ENCODE measurements at regions of chr2 and their contacts with region 1.

Region 1: DNA sequence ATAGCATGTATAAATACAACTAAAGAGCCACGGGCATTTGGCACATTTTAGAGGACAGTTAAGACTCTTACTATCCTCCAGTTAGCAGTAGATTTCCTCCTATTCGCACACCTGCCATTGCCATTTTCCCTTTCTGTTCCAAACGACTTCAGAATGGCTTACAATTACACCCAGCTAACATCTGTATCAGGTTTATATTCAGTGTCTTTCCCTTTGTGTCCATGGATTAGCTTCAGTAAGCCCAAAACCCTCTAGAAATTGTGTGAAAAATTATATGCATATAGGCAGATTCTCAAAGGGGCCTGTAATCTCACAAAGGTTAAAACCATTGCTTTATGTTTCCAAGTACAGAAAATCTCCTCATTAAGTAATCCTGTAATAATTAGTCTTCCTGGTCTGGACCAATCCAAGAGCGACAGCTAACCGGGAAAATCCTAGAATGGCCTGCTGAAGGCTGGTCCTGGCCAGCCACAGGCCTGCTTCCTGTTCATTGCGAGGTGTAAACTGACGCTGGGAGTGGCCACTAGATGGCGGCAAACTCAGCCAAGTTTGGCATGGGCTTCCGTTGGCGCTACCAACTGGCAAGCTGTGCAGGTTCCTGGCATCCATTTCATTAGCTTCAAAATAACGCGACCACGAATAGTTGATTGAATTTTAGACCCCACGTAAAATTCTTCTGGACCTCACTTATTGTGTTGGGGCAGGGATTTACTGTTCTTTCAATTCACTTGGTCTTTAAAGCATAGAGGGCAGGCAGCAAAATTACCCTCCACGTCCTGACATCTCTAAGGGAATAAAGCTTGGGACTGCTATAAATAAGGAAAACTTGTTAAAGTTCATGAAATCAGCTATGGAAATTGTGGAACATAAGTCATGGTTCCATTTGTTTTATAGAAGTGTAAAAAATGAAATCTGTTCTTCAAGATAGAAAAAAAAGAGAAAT is 17.1 kb downstream of the ARHGAP25 start:
- DNase-seq: peak; percentile 89 to 97
- ATAC-seq: peak; percentile 85 to 96 (median 94)
- H3K4me3 ChIP-seq: no peak overlapping the region
- H3K4me3 Mint-ChIP-seq: peak overlapping the region; percentile 66
- H3K27ac ChIP-seq: peak overlapping the region; percentile 77
- H3K27ac Mint-ChIP-seq: peak overlapping the region; percentile 92 to 98
- H3K4me1 ChIP-seq: peaks cover 34% of the 10 kb centered on the region
- H3K4me1 Mint-ChIP-seq: peaks cover 54 to 55% of the 10 kb centered on the region in 2 donors
- H3K27me3 ChIP-seq: no peaks in the 10 kb centered on the region
- H3K27me3 Mint-ChIP-seq: no peaks in the 10 kb centered on the region
- CTCF ChIP-seq: peak; percentile 84

Region 2: DNA sequence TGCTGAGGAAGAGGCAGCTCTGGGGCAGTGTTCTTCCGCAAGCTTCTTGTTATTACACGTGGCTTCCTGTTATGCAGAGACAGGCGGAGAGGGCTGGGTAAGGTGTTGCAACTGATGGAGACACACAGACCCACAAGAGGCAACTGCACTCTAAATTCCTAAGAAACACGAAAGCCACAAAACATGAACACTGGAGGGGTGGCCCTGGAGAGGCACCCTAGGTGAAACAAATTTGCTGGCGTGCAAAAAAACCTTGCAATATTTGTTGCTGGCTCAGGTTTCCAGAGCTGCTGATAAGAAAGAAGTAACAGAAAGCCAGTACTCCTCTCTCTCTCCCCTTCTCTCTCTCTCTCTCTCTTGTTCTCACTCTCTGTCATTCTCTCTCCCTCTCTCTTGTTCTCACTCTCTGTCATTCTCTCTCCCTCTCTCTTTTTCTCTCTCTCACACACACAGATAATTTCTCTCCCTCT is 14.7 kb after region 1 on chr2:
- intact Hi-C with region 1: loop called (anchors 1 kb)
- DNase-seq: peak; percentile 66 to 88
- ATAC-seq: peak; percentile 56 to 84 (median 76)
- H3K4me3 ChIP-seq: peak overlapping the region; percentile 6
- H3K4me3 Mint-ChIP-seq: peak overlapping the region; percentile 81
- H3K27ac ChIP-seq: peak overlapping the region; percentile 96
- H3K27ac Mint-ChIP-seq: peak overlapping the region in 1 of 2 donors; percentile 93
- H3K4me1 ChIP-seq: peaks cover 79% of the 10 kb centered on the region
- H3K4me1 Mint-ChIP-seq: peaks cover 92 to 98% of the 10 kb centered on the region in 2 donors
- H3K27me3 ChIP-seq: no peaks in the 10 kb centered on the region
- H3K27me3 Mint-ChIP-seq: peaks cover 0 to 4% of the 10 kb centered on the region in 2 donors
- CTCF ChIP-seq: no peak

Region 3: DNA sequence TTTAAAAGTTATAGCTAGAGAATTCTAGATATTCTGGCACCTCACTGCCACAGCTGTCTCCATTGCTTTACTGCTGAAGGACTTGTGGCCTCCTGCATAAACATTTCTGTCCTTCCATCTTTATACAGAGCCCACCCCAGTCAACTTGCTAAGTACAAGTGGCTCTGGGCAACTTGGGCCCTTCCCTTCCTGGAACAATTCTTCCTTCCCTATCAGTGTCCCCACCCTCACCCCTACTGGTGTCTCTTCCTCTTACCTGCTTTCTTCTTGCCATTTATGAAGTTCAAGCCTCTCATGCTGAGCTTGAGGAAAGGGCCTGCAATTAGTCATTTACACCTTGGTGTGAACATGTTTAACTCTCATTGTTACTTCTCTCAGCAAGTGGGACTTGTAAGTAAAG is 27.9 kb after region 1 on chr2:
- intact Hi-C with region 1: no loop called
- DNase-seq: no peak
- ATAC-seq: peak in 2 of 3 donors; percentile 23 to 33
- H3K4me3 ChIP-seq: no peak overlapping the region
- H3K4me3 Mint-ChIP-seq: peak overlapping the region; percentile 90
- H3K27ac ChIP-seq: peak overlapping the region; percentile 35
- H3K27ac Mint-ChIP-seq: peak overlapping the region in 1 of 2 donors; percentile 91
- H3K4me1 ChIP-seq: peaks cover 60% of the 10 kb centered on the region
- H3K4me1 Mint-ChIP-seq: peaks cover 71 to 76% of the 10 kb centered on the region in 2 donors
- H3K27me3 ChIP-seq: no peaks in the 10 kb centered on the region
- H3K27me3 Mint-ChIP-seq: no peaks in the 10 kb centered on the region
- CTCF ChIP-seq: no peak

Region 4: DNA sequence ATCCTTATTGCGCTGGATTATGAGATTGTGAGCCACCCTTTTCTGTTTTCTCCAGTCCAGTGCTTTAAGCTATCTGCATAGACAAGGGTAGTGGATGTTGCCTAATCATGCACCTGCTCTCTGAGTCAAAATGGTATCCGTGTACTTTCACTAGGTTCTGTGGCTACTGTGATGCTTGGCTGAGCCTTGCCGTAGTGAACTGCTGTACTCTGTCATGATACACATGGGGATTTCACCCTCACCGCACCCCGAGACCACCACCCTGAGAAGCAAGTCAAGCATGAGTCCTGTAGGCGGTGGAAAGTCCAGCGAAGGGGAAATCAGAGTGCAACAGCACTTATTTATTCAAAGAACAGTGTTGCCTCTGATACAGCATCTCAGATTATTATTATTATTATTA is 37.9 kb after region 1 on chr2:
- intact Hi-C with region 1: loop called (anchors 5 kb)
- DNase-seq: no peak
- ATAC-seq: no peak
- H3K4me3 ChIP-seq: no peak overlapping the region
- H3K4me3 Mint-ChIP-seq: no peak overlapping the region
- H3K27ac ChIP-seq: peak overlapping the region; percentile 74
- H3K27ac Mint-ChIP-seq: peak overlapping the region in 1 of 2 donors; percentile 32
- H3K4me1 ChIP-seq: peaks cover 30% of the 10 kb centered on the region
- H3K4me1 Mint-ChIP-seq: peaks cover 39 to 51% of the 10 kb centered on the region in 2 donors
- H3K27me3 ChIP-seq: no peaks in the 10 kb centered on the region
- H3K27me3 Mint-ChIP-seq: no peaks in the 10 kb centered on the region
- CTCF ChIP-seq: no peak

Region 5: GRCh38 chr2:68909793-68910674 is 158.4 kb after region 1 on chr2:
- intact Hi-C with region 1: loop called (anchors 1 kb)
- DNase-seq: peak; percentile 47 to 85
- ATAC-seq: peak; percentile 38 to 55 (median 43)
- H3K4me3 ChIP-seq: no peak overlapping the region
- H3K4me3 Mint-ChIP-seq: peak overlapping the region; percentile 59
- H3K27ac ChIP-seq: no peak overlapping the region
- H3K27ac Mint-ChIP-seq: peak overlapping the region; percentile 1 to 3
- H3K4me1 ChIP-seq: peaks cover 43% of the 10 kb centered on the region
- H3K4me1 Mint-ChIP-seq: peaks cover 25% of the 10 kb centered on the region in 2 donors
- H3K27me3 ChIP-seq: no peaks in the 10 kb centered on the region
- H3K27me3 Mint-ChIP-seq: no peaks in the 10 kb centered on the region
- CTCF ChIP-seq: peak; percentile 88

Measured in natural killer cell (primary cell).